Activated CD4-positive, alpha-beta T cell treated with anti-CD3 and anti-CD28 coated beads, Interleukin-2, amount 10 ng/mL, durations not matched to agents 24 days and 14 days (primary cell): ENCODE measurements at regions of chr1 and their contacts with region 1.

Region 1: GRCh38 chr1:203273206-203273868 is 32.0 kb upstream of the BTG2 start:
- DNase-seq: peak; percentile 97
- H3K4me3 Mint-ChIP-seq: peak overlapping the region; percentile 76
- H3K27ac Mint-ChIP-seq: peak overlapping the region; percentile 87
- H3K4me1 Mint-ChIP-seq: peaks cover 57% of the 10 kb centered on the region
- H3K27me3 Mint-ChIP-seq: no peaks in the 10 kb centered on the region

Region 2: DNA sequence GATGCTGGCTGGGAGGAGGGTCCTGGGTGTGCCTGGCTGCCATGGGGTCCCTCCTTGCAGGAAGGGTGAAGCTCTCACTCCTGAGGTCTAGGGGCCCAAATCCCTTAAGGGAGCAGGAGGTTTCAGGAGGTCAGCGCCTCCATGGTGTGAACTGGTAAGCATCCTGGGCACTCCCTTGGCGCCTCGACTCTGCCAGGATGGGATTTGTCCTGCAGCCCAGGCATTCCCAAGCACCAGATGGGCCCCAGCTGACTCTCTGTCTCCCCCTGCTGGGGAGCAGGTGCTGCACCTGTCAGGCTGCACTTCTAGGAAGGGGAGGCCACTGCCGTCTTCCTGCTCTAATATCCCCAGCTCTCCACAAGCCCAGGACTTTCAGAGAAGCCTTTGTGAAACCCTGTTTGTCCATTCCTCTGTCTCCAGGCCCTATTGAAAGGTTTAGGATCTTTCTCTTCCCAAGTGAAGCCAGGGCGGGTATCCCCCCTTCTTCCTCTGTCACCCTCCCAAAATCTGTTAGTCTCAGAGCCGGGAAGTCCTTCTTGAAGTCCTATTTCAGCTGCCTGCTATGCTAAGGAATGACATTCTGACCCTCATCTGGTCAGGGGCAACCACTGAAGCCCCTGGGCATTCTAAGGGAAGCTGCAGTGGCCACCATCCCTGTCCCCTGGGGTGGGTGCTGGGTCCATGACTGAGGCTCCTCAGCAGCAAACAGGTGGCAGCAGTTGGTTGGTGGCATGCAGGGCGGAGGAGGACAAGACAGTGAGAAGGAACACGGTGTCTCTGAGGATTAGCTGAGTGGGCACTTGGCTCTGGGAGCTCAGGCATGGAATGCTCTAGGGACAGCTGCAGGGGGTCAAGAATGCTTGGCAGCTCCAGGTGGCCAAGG is 101.0 kb before region 1 on chr1:
- intact Hi-C with region 1: no loop called
- DNase-seq: peak; percentile 86
- H3K4me3 Mint-ChIP-seq: no peak overlapping the region
- H3K27ac Mint-ChIP-seq: no peak overlapping the region
- H3K4me1 Mint-ChIP-seq: no peaks in the 10 kb centered on the region
- H3K27me3 Mint-ChIP-seq: no peaks in the 10 kb centered on the region

Region 3: GRCh38 chr1:203287109-203287893 is 14.0 kb after region 1 on chr1:
- intact Hi-C with region 1: loop called (anchors 1 kb)
- DNase-seq: peak; percentile 95
- H3K4me3 Mint-ChIP-seq: peak overlapping the region; percentile 82
- H3K27ac Mint-ChIP-seq: peak overlapping the region; percentile 97
- H3K4me1 Mint-ChIP-seq: peaks cover 69% of the 10 kb centered on the region
- H3K27me3 Mint-ChIP-seq: peaks cover 2% of the 10 kb centered on the region

Region 4: GRCh38 chr1:203304919-203305808 is 31.8 kb after region 1 on chr1 and contains the start of gene BTG2:
- intact Hi-C with region 1: loop called (anchors 1 kb)
- DNase-seq: peak; percentile 97
- H3K4me3 Mint-ChIP-seq: peak within 1 kb of the TSS; percentile 99
- H3K27ac Mint-ChIP-seq: peak within 1 kb of the TSS; percentile 98
- H3K4me1 Mint-ChIP-seq: peaks cover 62% of the 10 kb centered on the region
- H3K27me3 Mint-ChIP-seq: no peaks in the 10 kb centered on the region
- total RNA-seq, gene BTG2: 106 and 108 TPM in 2 replicates

Region 5: GRCh38 chr1:203326830-203327683 is 53.7 kb after region 1 on chr1:
- intact Hi-C with region 1: loop called (anchors 1 kb)
- DNase-seq: peak; percentile 98
- H3K4me3 Mint-ChIP-seq: peak overlapping the region; percentile 83
- H3K27ac Mint-ChIP-seq: peak overlapping the region; percentile 94
- H3K4me1 Mint-ChIP-seq: peaks cover 61% of the 10 kb centered on the region
- H3K27me3 Mint-ChIP-seq: no peaks in the 10 kb centered on the region

Region 6: DNA sequence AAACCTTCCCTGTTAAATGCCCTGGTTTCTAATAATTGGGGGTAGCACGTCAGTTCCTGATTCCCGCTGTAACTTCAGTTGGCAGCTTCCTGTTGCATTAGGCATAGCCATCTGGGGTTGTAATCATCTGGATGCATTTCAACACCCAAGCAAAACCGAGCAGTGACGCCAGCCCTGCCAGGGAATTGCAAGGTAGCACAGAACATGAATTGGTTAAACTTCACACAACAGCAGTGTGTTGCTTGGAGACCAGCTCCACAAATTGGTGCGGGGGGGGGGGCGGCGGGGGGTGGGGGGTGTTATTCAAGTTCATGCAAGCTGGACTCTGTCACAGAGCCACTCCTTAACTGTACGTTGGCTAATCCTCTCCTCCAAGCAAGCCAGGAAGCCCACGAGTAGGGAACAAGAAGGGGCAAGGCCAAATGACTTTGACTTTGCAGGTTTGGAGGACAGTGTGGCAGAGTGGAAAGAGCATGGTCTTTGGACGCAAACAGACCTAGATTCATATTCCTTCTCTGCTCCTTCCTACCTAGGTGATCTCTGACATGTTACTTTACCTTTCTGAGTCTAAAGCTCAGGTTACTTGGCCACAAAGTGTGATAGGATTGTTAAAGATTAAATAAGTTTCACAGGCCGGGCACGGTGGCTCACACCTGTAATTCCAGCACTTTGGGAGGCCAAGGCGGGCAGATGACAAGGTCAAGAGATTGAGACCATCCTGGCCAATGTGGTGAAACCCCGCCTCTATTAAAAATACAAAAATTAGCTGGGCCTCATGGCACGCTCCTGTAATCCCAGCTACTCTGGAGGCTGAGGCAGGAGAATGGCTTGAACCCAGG is 496.4 kb after region 1 on chr1:
- intact Hi-C with region 1: loop called (anchors 10 kb)
- DNase-seq: no peak
- H3K4me3 Mint-ChIP-seq: no peak overlapping the region
- H3K27ac Mint-ChIP-seq: peak overlapping the region; percentile 51
- H3K4me1 Mint-ChIP-seq: peaks cover 27% of the 10 kb centered on the region
- H3K27me3 Mint-ChIP-seq: no peaks in the 10 kb centered on the region